Breast epithelium (tissue), 4 donors: ENCODE measurements at regions of chr3 and their contacts with region 1.

Region 1: DNA sequence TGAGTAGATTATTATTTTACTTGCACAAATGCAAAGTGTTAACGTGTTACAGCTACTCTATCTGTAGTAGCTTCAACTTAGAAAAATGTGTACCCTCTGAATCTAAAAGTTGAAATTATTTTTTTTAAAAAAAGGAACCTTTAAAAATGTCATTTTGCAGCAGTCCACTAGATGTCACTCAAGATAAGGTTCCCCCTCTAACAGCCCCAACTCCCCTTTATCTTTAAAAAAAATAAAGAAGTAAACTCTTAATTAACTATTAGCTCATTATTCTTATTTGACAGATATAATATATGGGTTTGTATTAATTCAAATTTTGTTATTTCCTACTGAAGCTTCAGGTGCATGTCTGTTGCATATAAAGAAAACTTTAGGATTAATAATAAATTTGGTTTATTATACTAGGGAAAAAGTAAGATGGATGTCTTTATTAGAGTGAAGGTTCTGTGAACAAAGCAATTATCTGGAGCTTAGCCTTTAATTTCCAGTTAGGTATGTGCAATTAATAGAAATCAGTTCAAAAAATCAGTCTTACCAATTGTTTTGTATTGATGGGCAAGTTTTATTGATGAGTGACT is 288.5 kb downstream of the VGLL3 start:
- DNase-seq: no peak
- H3K4me3 ChIP-seq: no peak overlapping the region
- H3K27ac ChIP-seq: no peak overlapping the region
- H3K4me1 ChIP-seq: no peaks in the 10 kb centered on the region
- H3K27me3 ChIP-seq: no peaks in the 10 kb centered on the region
- CTCF ChIP-seq: no peak
- POLR2A ChIP-seq: no peak

Region 2: DNA sequence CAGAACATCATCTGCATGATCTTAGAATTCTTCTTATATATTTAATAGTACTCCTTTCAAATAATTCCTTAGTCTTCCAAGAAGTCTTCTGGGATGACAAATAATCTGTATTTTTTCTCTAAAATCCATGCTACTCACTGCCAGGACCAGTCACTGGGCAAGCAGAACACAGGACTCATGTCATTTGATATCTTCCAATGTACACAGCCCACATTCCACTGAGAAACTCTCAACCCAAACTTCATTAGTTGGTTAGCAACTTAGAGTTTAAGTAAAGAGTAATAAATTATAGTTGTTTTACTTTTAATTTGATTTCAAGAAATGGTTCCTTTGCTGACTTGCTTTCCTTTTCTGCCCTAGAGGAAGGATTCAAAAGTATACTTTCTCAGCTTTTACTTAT is 28.5 kb before region 1 on chr3:
- intact Hi-C with region 1: loop called (anchors 2 kb)
- DNase-seq: no peak
- H3K4me3 ChIP-seq: no peak overlapping the region
- H3K27ac ChIP-seq: no peak overlapping the region
- H3K4me1 ChIP-seq: no peaks in the 10 kb centered on the region
- H3K27me3 ChIP-seq: no peaks in the 10 kb centered on the region
- CTCF ChIP-seq: no peak
- POLR2A ChIP-seq: no peak

Region 3: GRCh38 chr3:87206074-87207034 is 503.9 kb after region 1 on chr3:
- intact Hi-C with region 1: no loop called
- DNase-seq: no peak
- H3K4me3 ChIP-seq: no peak overlapping the region
- H3K27ac ChIP-seq: no peak overlapping the region
- H3K4me1 ChIP-seq: no peaks in the 10 kb centered on the region
- H3K27me3 ChIP-seq: no peaks in the 10 kb centered on the region
- CTCF ChIP-seq: no peak
- POLR2A ChIP-seq: no peak